HAP-1 (cell line): ENCODE measurements at regions of chr9 and their contacts with region 1.

Region 1: GRCh38 chr9:121545875-121546423 is 46.3 kb upstream of the GGTA1 start:
- DNase-seq: peak; percentile 89 to 98
- H3K4me3 ChIP-seq: peak overlapping the region; percentile 19
- H3K4me1 ChIP-seq: peaks cover 7% of the 10 kb centered on the region
- H3K27me3 ChIP-seq: no peaks in the 10 kb centered on the region

Region 2: DNA sequence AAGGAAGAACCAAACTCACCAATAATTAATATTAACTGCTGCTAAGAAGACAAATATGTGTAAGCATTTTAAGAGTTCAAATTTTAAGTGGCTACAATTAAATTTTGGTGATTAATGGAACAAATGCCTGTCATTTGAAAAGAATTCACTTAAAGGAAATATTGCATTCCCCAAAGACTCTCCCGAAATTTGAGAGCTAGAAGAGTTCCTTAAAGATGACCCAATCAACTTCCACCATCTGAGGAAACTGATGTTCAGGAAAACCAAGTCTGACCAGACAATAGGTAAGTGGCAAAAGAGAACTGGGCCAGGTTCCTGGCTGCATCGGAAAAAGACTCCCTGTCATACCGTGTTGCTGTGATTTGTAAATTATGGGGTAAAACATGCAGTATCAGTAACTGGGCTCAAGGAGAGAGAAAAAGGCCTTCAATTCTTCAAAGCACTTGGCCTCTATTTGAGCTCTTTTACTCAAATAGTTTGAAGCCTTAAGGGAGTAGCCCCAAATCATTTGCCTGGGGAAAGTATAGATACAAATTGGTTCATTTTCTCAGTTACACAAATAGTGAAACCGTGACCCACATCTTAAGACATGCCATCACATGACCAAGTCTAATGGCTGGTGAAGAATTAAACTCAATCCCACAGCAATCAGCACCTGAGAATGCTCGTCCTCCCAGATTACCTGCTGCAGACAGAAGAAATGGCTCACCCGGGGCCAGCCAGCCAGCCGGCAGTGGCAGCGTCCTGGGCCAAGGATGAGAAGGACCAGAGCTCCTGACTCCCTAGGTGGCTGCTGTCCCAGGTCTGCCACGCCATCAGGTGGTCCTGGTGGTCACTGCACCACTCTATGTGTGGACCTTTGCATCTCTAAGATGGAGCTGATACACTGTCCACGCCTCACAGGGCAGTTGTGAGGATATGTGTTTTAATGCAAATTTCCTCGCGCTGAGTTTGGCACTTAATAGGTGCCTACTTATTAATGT is 384.2 kb after region 1 on chr9:
- in situ Hi-C with region 1: no loop called
- DNase-seq: peak in 1 of 2 experiments; percentile 44
- H3K4me3 ChIP-seq: no peak overlapping the region
- H3K4me1 ChIP-seq: no peaks in the 10 kb centered on the region
- H3K27me3 ChIP-seq: no peaks in the 10 kb centered on the region

Region 3: DNA sequence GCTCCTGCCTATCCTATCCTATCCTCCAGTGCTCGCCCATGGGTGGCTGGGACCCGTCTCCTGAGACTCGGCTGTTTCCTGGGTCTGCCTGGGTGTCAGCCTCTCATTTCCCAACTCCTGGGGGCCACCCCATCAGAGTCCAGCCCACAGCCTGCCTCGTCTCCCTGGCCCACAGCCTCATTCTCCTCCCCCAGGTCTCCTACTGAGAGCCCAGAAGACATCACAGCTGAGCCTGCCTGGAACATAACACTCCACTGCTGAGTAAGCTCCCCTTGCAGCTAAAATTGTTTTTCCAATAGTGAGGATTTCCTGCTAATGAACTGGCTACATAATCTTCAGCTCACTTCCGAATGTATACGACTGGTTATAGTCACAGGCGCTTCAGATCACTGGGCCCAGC is 451.8 kb after region 1 on chr9:
- in situ Hi-C with region 1: loop called (anchors 5 kb)
- DNase-seq: no peak
- H3K4me3 ChIP-seq: no peak overlapping the region
- H3K4me1 ChIP-seq: peaks cover 7% of the 10 kb centered on the region
- H3K27me3 ChIP-seq: no peaks in the 10 kb centered on the region

Region 4: DNA sequence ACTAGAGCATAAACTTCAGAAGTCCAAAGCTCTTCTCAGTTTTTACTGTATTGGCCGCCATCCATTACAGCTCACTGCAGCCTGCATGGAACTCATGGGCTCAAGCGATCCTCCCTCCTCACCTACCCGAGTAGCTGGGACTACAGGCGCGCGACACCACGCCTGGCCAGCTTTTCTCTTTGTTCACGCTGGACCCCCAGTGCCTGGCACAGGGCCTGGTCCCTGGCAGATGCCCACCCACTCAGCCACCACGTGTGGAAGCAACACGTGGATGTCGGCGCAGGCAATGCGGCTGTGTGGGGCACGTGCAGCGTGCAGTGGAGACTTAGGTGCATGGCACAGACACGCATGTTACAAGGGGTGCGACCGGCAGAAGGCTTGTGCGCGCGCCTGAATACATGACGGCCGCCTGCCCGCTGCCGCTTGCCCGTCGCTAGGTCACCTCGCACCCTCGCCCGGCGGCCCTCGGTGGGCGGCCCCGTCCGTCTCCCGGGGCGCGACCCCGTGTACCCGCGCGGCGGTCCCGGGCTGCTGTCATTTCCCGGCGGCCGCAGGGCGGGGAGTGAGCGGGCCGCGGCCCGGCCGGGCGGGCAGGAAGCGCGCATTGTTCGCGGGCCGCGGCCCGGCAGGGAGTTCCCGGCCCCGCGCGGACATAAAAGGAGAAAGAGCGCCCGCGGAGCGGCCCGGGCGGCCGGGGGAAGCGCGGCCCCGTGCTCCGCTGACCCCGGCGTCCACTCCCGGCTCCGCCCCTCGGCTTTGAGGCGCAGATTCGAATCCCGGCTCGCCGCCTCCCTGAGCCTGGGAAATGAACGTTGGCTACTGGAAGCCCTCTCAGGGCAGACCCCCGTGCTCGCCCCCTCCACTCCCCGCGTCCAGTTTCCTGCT is 800.8 kb after region 1 on chr9:
- in situ Hi-C with region 1: loop called (anchors 10 kb)
- DNase-seq: no peak
- H3K4me3 ChIP-seq: no peak overlapping the region
- H3K4me1 ChIP-seq: no peaks in the 10 kb centered on the region
- H3K27me3 ChIP-seq: 0 out of 2 replicates have a peak, but pooled peaks cover 2% of the 10 kb centered on the region